ENCODE measurements at regions of chr2 and their contacts with region 1.

Region 1: DNA sequence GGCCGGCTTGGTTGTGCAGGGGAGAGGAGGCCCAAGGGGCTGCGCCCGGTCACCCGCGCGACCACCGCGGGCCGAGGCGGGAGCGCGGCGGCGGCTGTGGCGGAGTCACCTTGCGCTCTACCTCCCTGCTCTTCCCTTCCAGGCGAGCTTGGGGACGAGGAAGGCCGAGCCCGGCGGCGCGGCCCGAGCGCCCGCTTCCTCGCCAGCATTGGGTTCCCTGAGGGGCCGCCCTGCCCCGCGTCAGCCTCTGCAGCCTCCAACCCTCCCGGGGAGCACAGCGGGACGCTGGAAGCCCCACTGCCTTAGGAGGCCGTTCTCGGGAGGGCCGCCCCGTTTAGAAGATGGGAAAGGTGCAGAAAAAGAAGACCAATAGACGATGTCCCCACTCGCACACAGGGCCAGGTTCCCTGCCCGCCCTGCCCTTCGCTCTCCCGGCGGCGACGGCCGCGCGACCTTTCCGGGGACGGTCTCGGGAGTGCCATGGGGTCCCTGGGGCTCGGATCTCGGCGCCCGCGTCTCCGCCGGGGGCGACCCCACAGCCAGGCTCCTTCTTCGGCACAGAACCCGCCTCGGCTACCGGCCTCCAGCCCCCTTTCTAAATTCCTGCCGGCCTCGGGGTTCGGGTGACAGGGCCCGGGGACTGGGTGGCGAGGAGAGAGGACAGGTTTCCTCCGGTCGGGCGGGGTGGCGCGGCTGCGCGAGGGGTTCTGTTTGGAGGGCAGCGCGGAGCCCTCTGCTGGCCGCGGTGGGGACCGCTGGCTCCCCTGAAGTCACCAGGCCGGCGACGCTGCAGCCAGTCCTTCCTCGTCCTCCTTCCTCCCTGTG is 85.5 kb downstream of the HS6ST1 start:
- DNase-seq: peak; percentile 92
- ATAC-seq: peak; percentile 99
- H3K4me3 Mint-ChIP-seq: peak overlapping the region; percentile 72
- H3K27ac Mint-ChIP-seq: no peak overlapping the region
- H3K4me1 Mint-ChIP-seq: peaks cover 5% of the 10 kb centered on the region
- H3K27me3 Mint-ChIP-seq: no peaks in the 10 kb centered on the region
- CTCF ChIP-seq: peak; percentile 80

Region 2: DNA sequence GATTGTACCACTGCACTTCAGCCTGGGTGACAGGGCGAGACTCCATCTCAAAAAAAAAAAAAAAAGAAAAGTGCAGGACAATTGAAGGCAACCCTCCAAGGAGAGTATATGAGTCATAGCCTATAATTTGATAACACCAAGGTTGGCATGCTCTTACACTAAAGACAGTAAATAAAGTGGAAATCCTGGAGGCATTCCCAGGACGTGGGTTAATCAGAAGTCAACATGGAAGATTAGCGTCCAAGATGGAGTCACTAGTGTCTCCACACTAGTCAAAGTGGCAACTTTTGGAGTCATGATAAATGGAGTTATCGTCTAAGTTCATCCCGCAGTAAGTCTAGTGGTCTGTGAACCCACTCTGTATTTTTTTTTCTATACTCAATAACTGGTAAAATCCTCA is 163.4 kb before region 1 on chr2:
- CTCF ChIA-PET with region 1: no interaction called
- POLR2A ChIA-PET with region 1: no interaction called
- intact Hi-C with region 1: loop called (anchors 10 kb)
- DNase-seq: no peak
- ATAC-seq: no peak
- H3K4me3 Mint-ChIP-seq: no peak overlapping the region
- H3K27ac Mint-ChIP-seq: no peak overlapping the region
- H3K4me1 Mint-ChIP-seq: no peaks in the 10 kb centered on the region
- H3K27me3 Mint-ChIP-seq: no peaks in the 10 kb centered on the region
- CTCF ChIP-seq: no peak

Region 3: GRCh38 chr2:128178650-128179460 is 54.3 kb before region 1 on chr2:
- CTCF ChIA-PET with region 1: interaction called, 15 read pairs
- POLR2A ChIA-PET with region 1: no interaction called
- intact Hi-C with region 1: loop called (anchors 5 kb)
- DNase-seq: peak; percentile 68
- ATAC-seq: peak; percentile 78
- H3K4me3 Mint-ChIP-seq: no peak overlapping the region
- H3K27ac Mint-ChIP-seq: no peak overlapping the region
- H3K4me1 Mint-ChIP-seq: no peaks in the 10 kb centered on the region
- H3K27me3 Mint-ChIP-seq: no peaks in the 10 kb centered on the region
- CTCF ChIP-seq: peak; percentile 71

Measured in activated CD8-positive, alpha-beta T cell treated with anti-CD3 and anti-CD28 coated beads for 36 hours (primary cell).